CD4-positive, alpha-beta T cell (primary cell): ENCODE measurements at regions of chr9 and their contacts with region 1.

Region 1: DNA sequence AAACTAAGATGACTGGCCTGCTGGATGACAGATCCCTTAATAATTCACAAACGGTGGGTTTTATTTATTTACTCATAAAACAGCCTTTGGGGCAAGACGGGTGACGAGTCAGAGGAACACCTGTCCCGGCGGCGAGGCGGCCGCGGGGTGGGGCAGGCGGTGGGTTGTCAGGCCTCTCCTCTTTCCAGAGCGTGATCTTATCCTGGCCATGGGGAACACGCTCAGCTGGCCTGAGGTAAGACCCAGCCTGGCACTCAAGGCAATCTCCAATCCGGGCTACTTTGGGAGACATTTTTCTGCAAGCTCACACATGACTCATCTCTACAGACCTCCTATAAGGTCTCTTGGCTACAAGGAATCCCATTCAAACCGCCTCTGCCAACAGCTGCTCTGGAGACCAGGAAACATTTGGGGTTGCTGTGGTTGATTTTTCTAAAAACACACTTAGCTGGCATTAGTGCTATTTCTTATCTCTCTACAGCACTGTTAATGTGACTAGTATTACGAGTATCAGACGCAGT is 6.3 kb downstream of the RAPGEF1 start:
- DNase-seq: peak in 7 of 14 experiments; percentile 31 to 77 (median 46)
- ATAC-seq: peak; percentile 10
- H3K4me3 ChIP-seq: peak overlapping the region; percentile 46
- H3K4me3 Mint-ChIP-seq: peak overlapping the region; percentile 83
- H3K27ac ChIP-seq: peak overlapping the region; percentile 72 to 86
- H3K27ac Mint-ChIP-seq: peak overlapping the region; percentile 86
- H3K4me1 ChIP-seq: peaks cover 99% of the 10 kb centered on the region
- H3K4me1 Mint-ChIP-seq: peaks cover 85% of the 10 kb centered on the region
- H3K27me3 ChIP-seq: no peaks in the 10 kb centered on the region
- H3K27me3 Mint-ChIP-seq: no peaks in the 10 kb centered on the region
- CTCF ChIP-seq: no peak

Region 2: DNA sequence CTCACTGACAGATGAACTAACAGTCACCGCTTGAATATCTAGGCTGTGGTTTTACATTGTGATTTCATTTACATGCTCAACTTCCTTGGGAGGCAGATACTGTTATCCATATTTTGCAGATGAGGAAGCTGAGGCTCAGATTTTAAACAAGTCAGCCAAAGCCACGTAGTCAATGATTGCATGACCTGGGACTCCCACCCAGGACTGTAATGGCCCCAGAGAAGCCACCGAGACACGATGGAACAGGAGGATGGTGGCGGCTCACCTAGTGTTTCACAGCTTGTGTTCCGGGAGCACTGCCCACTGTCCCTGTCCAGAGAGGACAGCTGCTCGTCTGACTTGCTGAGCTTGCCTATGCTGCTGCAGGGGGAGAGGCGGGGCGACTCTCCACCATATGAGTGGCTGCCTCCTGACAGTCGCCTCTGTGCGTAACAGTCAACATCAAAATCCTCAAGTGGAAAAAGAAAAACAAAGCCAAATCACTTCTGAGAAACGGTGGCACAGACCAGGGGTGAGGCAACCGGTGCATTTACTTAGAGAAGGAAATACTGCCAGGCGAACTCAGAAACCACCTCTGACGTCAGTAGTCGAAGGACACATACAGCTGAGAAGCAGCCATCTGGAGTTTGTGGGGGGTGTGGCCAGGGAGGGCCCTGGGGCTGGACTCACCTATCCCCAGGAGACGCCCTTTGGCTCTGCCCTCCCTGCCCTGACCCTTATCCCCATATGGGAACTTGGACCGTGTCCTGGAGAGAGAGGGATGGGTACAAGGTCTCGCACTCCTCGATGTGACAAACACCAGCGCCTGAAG is 105.7 kb before region 1 on chr9:
- CTCF ChIA-PET with region 1: interaction called, 4 read pairs
- POLR2A ChIA-PET with region 1: interaction called, 7 read pairs
- intact Hi-C with region 1: loop called in 1 of 2 experiments (anchors 5 kb)
- DNase-seq: peak; percentile 12 to 92 (median 42)
- ATAC-seq: peak; percentile 86
- H3K4me3 ChIP-seq: no peak overlapping the region
- H3K4me3 Mint-ChIP-seq: peak overlapping the region; percentile 63
- H3K27ac ChIP-seq: peak overlapping the region; percentile 61 to 62
- H3K27ac Mint-ChIP-seq: peak overlapping the region; percentile 95
- H3K4me1 ChIP-seq: peaks cover 61% of the 10 kb centered on the region
- H3K4me1 Mint-ChIP-seq: peaks cover 38% of the 10 kb centered on the region
- H3K27me3 ChIP-seq: no peaks in the 10 kb centered on the region
- H3K27me3 Mint-ChIP-seq: no peaks in the 10 kb centered on the region
- CTCF ChIP-seq: no peak

Region 3: GRCh38 chr9:131656356-131657036 is 77.1 kb before region 1 on chr9:
- CTCF ChIA-PET with region 1: interaction called, 3 read pairs
- POLR2A ChIA-PET with region 1: interaction called, 5 read pairs
- intact Hi-C with region 1: loop called in 1 of 2 experiments (anchors 2 kb)
- DNase-seq: peak; percentile 58 to 92 (median 74)
- ATAC-seq: peak; percentile 81
- H3K4me3 ChIP-seq: no peak overlapping the region
- H3K4me3 Mint-ChIP-seq: peak overlapping the region; percentile 32
- H3K27ac ChIP-seq: peak overlapping the region; percentile 71 to 76
- H3K27ac Mint-ChIP-seq: peak overlapping the region; percentile 94
- H3K4me1 ChIP-seq: peaks cover 69% of the 10 kb centered on the region
- H3K4me1 Mint-ChIP-seq: peaks cover 73% of the 10 kb centered on the region
- H3K27me3 ChIP-seq: no peaks in the 10 kb centered on the region
- H3K27me3 Mint-ChIP-seq: no peaks in the 10 kb centered on the region
- CTCF ChIP-seq: no peak

Region 4: GRCh38 chr9:131668439-131669268 is 64.9 kb before region 1 on chr9:
- CTCF ChIA-PET with region 1: interaction called, 20 read pairs
- POLR2A ChIA-PET with region 1: interaction called, 12 read pairs
- intact Hi-C with region 1: loop called in 1 of 2 experiments (anchors 2 kb)
- DNase-seq: peak; percentile 46 to 86 (median 72)
- ATAC-seq: peak; percentile 68
- H3K4me3 ChIP-seq: peak overlapping the region; percentile 23
- H3K4me3 Mint-ChIP-seq: peak overlapping the region; percentile 64
- H3K27ac ChIP-seq: peak overlapping the region; percentile 89 to 92
- H3K27ac Mint-ChIP-seq: peak overlapping the region; percentile 96
- H3K4me1 ChIP-seq: peaks cover 87% of the 10 kb centered on the region
- H3K4me1 Mint-ChIP-seq: peaks cover 98% of the 10 kb centered on the region
- H3K27me3 ChIP-seq: no peaks in the 10 kb centered on the region
- H3K27me3 Mint-ChIP-seq: no peaks in the 10 kb centered on the region
- CTCF ChIP-seq: no peak

Region 5: DNA sequence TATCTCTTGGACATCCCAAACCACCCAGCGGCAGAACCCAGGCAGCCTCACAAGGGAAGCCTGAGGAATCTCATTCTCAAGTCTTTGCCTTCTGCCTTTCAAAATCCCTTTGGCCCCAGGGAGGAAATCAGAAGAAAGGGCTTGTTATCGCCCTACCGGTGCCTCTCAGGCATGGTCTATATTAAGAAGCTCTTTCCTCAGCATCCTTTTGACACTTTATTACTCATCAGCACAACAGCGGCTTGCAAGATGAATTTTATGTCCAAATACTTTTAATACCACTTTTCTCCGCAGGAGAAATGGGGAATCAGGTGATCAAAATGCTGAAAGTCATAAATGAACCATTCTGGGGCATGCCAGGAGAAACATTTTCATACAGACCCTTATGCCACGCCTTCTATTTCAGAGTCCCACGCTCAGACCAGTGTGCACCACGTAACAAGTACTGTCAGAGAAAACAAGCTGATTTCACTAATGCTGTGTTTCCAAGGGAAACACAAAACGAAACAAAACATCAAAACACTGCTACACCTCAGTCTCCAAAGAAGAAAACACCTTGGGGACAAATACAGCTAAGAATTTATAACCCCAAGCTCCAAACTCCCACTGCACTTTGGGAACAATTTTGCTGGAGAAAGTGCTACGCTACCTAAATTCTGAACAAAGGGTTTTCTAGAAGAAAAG is 23.7 kb before region 1 on chr9:
- CTCF ChIA-PET with region 1: interaction called, 12 read pairs
- POLR2A ChIA-PET with region 1: interaction called, 12 read pairs
- intact Hi-C with region 1: loop called in 1 of 2 experiments (anchors 1 kb)
- DNase-seq: peak in 9 of 14 experiments; percentile 23 to 87 (median 35)
- ATAC-seq: peak; percentile 89
- H3K4me3 ChIP-seq: peak overlapping the region; percentile 3
- H3K4me3 Mint-ChIP-seq: peak overlapping the region; percentile 67
- H3K27ac ChIP-seq: peak overlapping the region; percentile 51 to 81
- H3K27ac Mint-ChIP-seq: peak overlapping the region; percentile 87
- H3K4me1 ChIP-seq: peaks cover 76% of the 10 kb centered on the region
- H3K4me1 Mint-ChIP-seq: peaks cover 86% of the 10 kb centered on the region
- H3K27me3 ChIP-seq: no peaks in the 10 kb centered on the region
- H3K27me3 Mint-ChIP-seq: no peaks in the 10 kb centered on the region
- CTCF ChIP-seq: no peak

Region 6: GRCh38 chr9:131719262-131719908 is 14.2 kb before region 1 on chr9:
- CTCF ChIA-PET with region 1: interaction called, 4 read pairs
- POLR2A ChIA-PET with region 1: interaction called, 12 read pairs
- intact Hi-C with region 1: no loop called
- DNase-seq: peak in 1 of 14 experiments; percentile 33
- ATAC-seq: peak; percentile 50
- H3K4me3 ChIP-seq: no peak overlapping the region
- H3K4me3 Mint-ChIP-seq: peak overlapping the region; percentile 4
- H3K27ac ChIP-seq: no peak overlapping the region
- H3K27ac Mint-ChIP-seq: peak overlapping the region; percentile 85
- H3K4me1 ChIP-seq: peaks cover 62% of the 10 kb centered on the region
- H3K4me1 Mint-ChIP-seq: peaks cover 81% of the 10 kb centered on the region
- H3K27me3 ChIP-seq: no peaks in the 10 kb centered on the region
- H3K27me3 Mint-ChIP-seq: no peaks in the 10 kb centered on the region
- CTCF ChIP-seq: no peak